WTC11 (cell line): ENCODE measurements at regions of chr7 and their contacts with region 1.

Region 1: DNA sequence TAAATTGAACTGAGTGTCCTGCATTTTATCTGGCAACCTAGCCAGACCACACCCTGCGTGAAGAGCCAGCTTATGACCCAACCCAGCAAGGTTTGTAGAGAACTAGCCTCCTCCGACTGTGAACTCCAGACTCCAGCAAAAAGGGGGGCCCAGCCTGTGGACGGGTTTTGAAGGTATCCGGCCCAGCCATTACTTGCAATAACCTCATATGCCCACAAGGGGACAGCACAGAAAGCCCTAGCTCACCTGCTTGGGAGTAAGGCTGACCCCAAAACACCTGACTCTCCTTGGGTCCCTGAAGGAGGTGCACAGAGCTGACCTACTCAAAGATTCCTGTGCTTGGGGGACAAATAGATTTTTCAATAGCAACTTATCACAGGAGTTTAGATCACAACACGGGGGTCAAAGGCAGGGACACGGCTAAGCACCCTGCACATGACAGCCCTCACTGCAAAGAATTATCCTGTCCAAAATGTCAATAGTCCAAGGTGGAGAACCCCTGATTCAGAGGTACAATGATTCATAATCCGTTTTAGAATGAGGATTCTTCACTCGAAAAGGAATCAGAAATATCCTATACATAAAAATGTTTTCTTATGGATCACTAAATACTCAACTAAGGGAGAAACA is 4.6 kb downstream of the TRPV6 start:
- DNase-seq: peak; percentile 72
- ATAC-seq: peak; percentile 72
- H3K4me3 Mint-ChIP-seq: no peak overlapping the region
- H3K27ac Mint-ChIP-seq: no peak overlapping the region
- H3K4me1 Mint-ChIP-seq: peaks cover 6% of the 10 kb centered on the region
- H3K27me3 Mint-ChIP-seq: no peaks in the 10 kb centered on the region; the same call in 1 of the 2 replicates
- CTCF ChIP-seq: peak; percentile 96

Region 2: DNA sequence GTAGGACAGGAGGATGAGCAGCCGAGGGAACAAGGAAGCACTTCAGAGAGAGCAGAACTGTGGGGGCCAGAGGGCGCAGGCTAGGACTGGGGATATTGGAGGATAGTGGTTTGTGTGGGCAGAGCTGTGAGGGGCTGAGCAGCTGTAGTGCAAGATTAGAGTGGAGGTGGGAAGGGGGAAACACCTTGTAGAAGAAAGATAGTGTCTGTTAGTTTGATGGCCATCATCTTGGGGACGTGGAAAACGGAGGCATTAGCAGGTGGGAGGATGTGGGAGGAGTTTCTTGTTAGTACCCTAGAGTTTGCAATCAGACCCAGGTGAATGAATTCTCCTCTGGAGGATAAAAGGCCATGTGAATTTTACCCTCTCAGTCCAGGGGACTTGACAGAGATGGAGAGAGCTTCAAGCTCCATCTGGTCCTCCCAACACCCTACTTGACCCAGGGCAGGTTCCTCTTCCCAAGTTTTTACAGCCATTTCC is 76.2 kb before region 1 on chr7:
- CTCF ChIA-PET with region 1: no interaction called
- POLR2A ChIA-PET with region 1: no interaction called
- DNase-seq: no peak
- ATAC-seq: peak; percentile 45
- H3K4me3 Mint-ChIP-seq: no peak overlapping the region
- H3K27ac Mint-ChIP-seq: no peak overlapping the region
- H3K4me1 Mint-ChIP-seq: peaks cover 20% of the 10 kb centered on the region
- H3K27me3 Mint-ChIP-seq: peaks cover 33% of the 10 kb centered on the region
- CTCF ChIP-seq: no peak

Region 3: GRCh38 chr7:142898377-142899170 is 17.6 kb after region 1 on chr7:
- CTCF ChIA-PET with region 1: interaction called, 11 read pairs
- POLR2A ChIA-PET with region 1: no interaction called
- DNase-seq: no peak
- ATAC-seq: peak; percentile 61
- H3K4me3 Mint-ChIP-seq: no peak overlapping the region
- H3K27ac Mint-ChIP-seq: no peak overlapping the region
- H3K4me1 Mint-ChIP-seq: peaks cover 13% of the 10 kb centered on the region
- H3K27me3 Mint-ChIP-seq: peaks cover 7% of the 10 kb centered on the region
- CTCF ChIP-seq: no peak

Region 4: DNA sequence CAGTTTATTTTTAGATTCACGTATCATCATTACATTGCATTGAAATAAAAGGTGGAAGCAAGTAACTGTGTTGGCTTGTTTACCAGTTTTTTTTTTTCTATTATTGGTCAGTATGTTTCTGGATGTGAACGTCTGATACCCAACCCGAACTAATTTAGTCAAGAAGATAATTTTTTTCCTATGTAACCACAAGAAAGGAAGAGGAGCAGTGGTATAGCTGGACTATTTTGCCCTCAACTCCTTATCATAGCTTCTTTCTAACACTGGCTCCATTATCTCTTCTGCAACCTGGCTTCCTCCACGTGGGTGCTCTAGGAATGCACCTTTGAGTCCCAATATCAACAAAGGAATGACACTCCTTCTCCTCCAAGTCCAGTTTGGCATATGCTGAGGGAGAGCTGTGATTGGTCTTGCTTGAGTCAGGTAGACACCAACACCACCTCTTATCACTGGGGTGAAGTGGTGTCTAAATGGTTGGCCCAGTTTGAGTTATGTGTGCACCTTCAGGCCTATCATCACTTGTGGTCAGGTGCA is 116.5 kb after region 1 on chr7:
- CTCF ChIA-PET with region 1: interaction called, 30 read pairs
- POLR2A ChIA-PET with region 1: no interaction called
- DNase-seq: no peak
- ATAC-seq: no peak
- H3K4me3 Mint-ChIP-seq: no peak overlapping the region
- H3K27ac Mint-ChIP-seq: no peak overlapping the region
- H3K4me1 Mint-ChIP-seq: no peaks in the 10 kb centered on the region
- H3K27me3 Mint-ChIP-seq: peaks cover 3% of the 10 kb centered on the region; the same call in 1 of the 2 replicates
- CTCF ChIP-seq: no peak